Right cardiac atrium (tissue), 5 donors: ENCODE measurements at regions of chr11 and their contacts with region 1.

Region 1: DNA sequence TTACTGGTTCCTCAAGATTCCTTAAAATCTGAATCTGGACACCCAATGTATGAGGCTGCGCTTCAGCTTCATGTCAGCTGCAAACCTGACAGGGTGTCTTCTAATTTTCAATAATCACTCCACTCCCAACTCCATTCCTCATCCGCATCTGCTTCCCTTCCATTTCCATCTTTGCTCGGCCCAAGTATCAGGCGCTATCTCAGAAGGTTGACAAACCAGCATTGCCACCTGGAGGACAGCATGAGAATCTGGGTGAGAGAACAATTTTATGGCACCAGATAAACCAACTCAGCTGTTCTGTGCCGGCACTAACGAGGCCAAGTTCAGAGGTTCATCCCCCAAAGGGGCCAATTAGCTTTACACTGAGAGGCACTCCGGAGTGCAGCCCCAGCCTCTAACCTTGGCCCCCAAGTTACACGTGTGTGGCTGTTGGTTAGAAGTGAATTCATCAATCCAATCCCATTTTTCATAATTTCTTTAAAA is 79.1 kb upstream of the LMO2 start:
- DNase-seq: peak in 2 of 3 donors; percentile 39 to 52
- ATAC-seq: peak; percentile 88 to 92
- H3K4me3 ChIP-seq: no peak overlapping the region
- H3K27ac ChIP-seq: no peak overlapping the region
- H3K4me1 ChIP-seq: no peaks in the 10 kb centered on the region
- H3K27me3 ChIP-seq: no peaks in the 10 kb centered on the region

Region 2: GRCh38 chr11:33857933-33858371 is 113.1 kb before region 1 on chr11:
- intact Hi-C with region 1: loop called (anchors 2 to 5 kb)
- DNase-seq: peak; percentile 74 to 89 (median 87)
- ATAC-seq: peak; percentile 88 to 91
- H3K4me3 ChIP-seq: no peak overlapping the region
- H3K27ac ChIP-seq: no peak overlapping the region
- H3K4me1 ChIP-seq: no peaks in the 10 kb centered on the region
- H3K27me3 ChIP-seq: no peaks in the 10 kb centered on the region